ENCODE measurements at regions of chr18 and their contacts with region 1.

Region 1: GRCh38 chr18:57881818-57882413 is 78.8 kb upstream of the ATP8B1 start:
- DNase-seq: peak; percentile 59
- ATAC-seq: peak; percentile 95
- H3K4me3 Mint-ChIP-seq: no peak overlapping the region
- H3K27ac Mint-ChIP-seq: no peak overlapping the region
- H3K4me1 Mint-ChIP-seq: no peaks in the 10 kb centered on the region
- H3K27me3 Mint-ChIP-seq: peaks cover 4% of the 10 kb centered on the region; the same call in 1 of the 2 replicates
- CTCF ChIP-seq: peak; percentile 89

Region 2: GRCh38 chr18:57784034-57784800 is 97.7 kb before region 1 on chr18:
- CTCF ChIA-PET with region 1: no interaction called
- POLR2A ChIA-PET with region 1: no interaction called
- DNase-seq: no peak
- ATAC-seq: peak; percentile 43
- H3K4me3 Mint-ChIP-seq: no peak overlapping the region
- H3K27ac Mint-ChIP-seq: 0 out of 2 replicates have a peak overlapping the region, but pooled peaks have one; percentile 0
- H3K4me1 Mint-ChIP-seq: peaks cover 27% of the 10 kb centered on the region
- H3K27me3 Mint-ChIP-seq: no peaks in the 10 kb centered on the region
- CTCF ChIP-seq: no peak

Region 3: GRCh38 chr18:57816208-57816959 is 65.5 kb before region 1 on chr18:
- CTCF ChIA-PET with region 1: no interaction called
- POLR2A ChIA-PET with region 1: no interaction called
- DNase-seq: no peak
- ATAC-seq: no peak
- H3K4me3 Mint-ChIP-seq: no peak overlapping the region
- H3K27ac Mint-ChIP-seq: no peak overlapping the region
- H3K4me1 Mint-ChIP-seq: peaks cover 9% of the 10 kb centered on the region
- H3K27me3 Mint-ChIP-seq: no peaks in the 10 kb centered on the region; the same call in 1 of the 2 replicates
- CTCF ChIP-seq: no peak

Region 4: DNA sequence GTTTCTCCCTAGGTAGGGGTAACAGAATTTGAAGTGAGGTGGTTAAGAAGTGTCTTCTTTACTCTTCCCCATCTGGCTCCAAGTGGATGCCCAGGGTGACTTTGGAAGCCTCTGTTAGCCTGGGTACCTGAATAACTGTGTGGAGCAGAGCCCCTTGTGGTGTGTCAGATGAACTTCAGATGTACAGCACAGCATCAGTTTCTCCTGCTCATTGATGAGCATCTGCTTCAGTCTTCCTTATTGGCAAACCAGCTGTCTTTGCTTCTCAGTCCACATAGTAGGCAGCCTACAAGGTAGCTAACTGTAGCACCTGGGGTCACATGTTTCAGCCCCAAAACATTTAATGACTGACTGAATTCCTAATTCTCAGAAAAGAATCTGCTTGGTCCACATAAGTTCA is 22.6 kb before region 1 on chr18:
- CTCF ChIA-PET with region 1: interaction called, 11 read pairs
- POLR2A ChIA-PET with region 1: no interaction called
- DNase-seq: peak; percentile 20
- ATAC-seq: peak; percentile 95
- H3K4me3 Mint-ChIP-seq: no peak overlapping the region
- H3K27ac Mint-ChIP-seq: no peak overlapping the region
- H3K4me1 Mint-ChIP-seq: peaks cover 17% of the 10 kb centered on the region
- H3K27me3 Mint-ChIP-seq: no peaks in the 10 kb centered on the region; the same call in 1 of the 2 replicates
- CTCF ChIP-seq: peak; percentile 53